A549 (cell line): ENCODE measurements at regions of chr17 and their contacts with region 1.

Region 1: DNA sequence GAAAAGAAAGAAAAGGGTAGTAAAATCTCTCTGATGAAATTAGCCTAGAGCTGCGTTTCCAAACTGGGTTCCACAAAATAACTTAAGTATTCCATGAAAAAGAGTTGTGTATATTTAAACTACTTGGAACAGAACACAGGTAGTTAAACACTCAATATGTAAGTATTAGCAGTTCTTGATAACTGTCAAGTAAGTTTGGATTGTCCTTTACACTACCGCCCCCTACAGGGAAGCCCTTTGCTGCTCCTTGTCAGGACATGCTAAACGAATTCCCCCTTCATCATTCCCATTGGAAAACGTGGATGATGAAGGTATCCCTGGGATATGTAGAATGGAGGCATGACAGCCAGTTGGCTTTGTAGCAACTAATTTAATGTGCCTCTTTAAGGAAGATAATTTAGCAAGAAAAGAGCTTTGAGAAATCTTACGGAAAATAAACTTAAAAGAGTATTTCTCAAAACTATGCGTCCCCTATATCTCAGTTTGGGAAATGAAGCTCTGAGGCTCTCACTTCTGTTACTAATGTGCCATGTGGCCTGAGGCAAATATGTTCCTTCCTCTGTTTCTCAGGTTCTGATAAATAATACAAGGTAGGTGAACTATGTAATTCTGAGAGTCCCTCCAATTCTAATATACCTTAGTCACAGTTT is 18.8 kb downstream of the NCBP3 start:
- DNase-seq: peak; percentile 75 to 86
- ATAC-seq: peak; percentile 86 to 88
- H3K4me3 ChIP-seq: no peak overlapping the region
- H3K27ac ChIP-seq: no peak overlapping the region
- H3K4me1 ChIP-seq: no peaks in the 10 kb centered on the region
- CTCF ChIP-seq: peak; percentile 87
- EP300 ChIP-seq: no peak
- POLR2A ChIP-seq: no peak
- RAD21 ChIP-seq: peak; percentile 81 to 88

Region 2: GRCh38 chr17:3723556-3724369 is 103.5 kb before region 1 on chr17 and contains the start of gene HASPIN:
- CTCF ChIA-PET with region 1: interaction called, 491 read pairs
- POLR2A ChIA-PET with region 1: interaction called, 5 read pairs
- DNase-seq: peak; percentile 94 to 97
- ATAC-seq: peak; percentile 94 to 95
- H3K4me3 ChIP-seq: peak within 1 kb of the TSS; percentile 60
- H3K27ac ChIP-seq: peak within 1 kb of the TSS; percentile 88 to 89
- H3K4me1 ChIP-seq: peaks cover 42% of the 10 kb centered on the region
- CTCF ChIP-seq: no peak
- EP300 ChIP-seq: no peak; a peak in 1 of 5 replicates
- POLR2A ChIP-seq: peak; percentile 93
- RAD21 ChIP-seq: no peak; a peak in 1 of 5 replicates
- polyA plus RNA-seq, gene HASPIN: 8.7 and 10.0 TPM in 2 replicates

Region 3: DNA sequence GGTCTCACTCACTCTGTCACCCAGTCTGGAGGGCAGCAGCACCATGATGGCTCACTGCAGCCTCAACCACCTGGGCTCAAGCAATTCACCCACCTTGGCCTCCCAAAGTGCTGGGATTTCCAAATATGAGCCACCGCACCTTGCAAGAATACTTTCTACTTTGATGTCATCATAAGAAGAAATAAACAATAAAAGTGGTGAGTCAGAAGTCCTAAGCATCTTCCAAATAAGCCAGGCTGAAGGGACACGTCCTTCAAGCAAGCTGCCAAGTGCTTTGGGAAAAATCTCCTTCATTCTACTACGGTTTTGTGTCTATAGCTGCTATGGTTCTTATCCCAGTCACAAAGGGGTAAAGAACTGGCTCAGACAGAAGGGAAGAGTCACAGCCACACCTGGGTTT is 83.2 kb before region 1 on chr17:
- CTCF ChIA-PET with region 1: interaction called, 491 read pairs
- POLR2A ChIA-PET with region 1: no interaction called
- DNase-seq: peak in 1 of 2 experiments; percentile 52
- ATAC-seq: no peak; a peak in 1 of 6 replicates
- H3K4me3 ChIP-seq: no peak overlapping the region
- H3K27ac ChIP-seq: no peak overlapping the region
- H3K4me1 ChIP-seq: peaks cover 8% of the 10 kb centered on the region; the same call in 2 of the 3 replicates
- CTCF ChIP-seq: no peak
- EP300 ChIP-seq: no peak
- POLR2A ChIP-seq: no peak
- RAD21 ChIP-seq: no peak

Region 4: DNA sequence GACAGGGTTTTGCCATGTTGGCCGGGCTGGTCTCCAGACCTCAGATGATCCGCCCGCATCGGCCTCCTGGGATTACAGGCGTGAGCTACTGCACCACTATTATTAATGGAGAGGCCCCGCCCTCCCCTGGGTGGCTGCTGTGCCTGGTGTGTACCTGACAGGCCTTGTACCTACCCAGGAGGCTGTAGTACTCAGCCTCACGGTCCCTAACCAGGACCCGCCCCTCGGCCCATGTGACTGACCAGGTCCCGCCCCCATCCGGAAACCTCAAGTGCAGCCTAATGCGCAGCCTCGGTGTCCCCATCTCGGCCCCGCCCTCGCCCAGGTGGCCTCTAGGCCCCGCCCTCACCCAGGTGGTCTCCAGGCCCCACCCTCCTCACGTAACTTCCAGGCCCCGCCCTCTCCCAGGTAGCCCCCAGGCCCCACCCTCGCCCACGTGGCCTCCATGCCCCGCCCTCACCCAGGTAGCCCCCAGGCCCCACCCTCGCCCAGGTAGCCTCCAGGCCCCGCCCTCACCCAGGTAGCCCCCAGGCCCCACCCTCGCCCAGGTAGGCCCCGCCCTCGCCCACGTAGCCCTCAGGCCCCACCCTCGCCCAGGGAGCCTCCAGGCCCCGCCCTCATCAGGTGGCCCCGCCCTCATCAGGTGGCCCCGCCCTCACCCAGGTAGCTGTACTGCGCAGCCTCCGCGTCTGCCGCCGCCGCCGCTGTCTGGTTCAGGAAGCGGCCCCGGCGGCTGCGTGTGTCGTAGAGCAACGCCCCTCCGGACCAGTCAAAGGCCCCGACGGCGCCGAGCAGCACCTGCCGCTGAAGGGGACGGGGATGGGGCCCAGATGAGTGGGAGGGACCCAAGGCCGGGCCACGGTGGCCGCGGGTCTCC is 72.6 kb before region 1 on chr17:
- CTCF ChIA-PET with region 1: interaction called, 24 read pairs
- POLR2A ChIA-PET with region 1: no interaction called
- DNase-seq: peak in 1 of 2 experiments; percentile 58
- ATAC-seq: peak; percentile 54 to 75
- H3K4me3 ChIP-seq: peak overlapping the region; percentile 36
- H3K27ac ChIP-seq: peak overlapping the region in 1 of 2 experiments; percentile 45; a peak in 2 of 6 replicates
- H3K4me1 ChIP-seq: peaks cover 9% of the 10 kb centered on the region; the same call in 1 of the 3 replicates
- CTCF ChIP-seq: no peak
- EP300 ChIP-seq: no peak
- POLR2A ChIP-seq: no peak
- RAD21 ChIP-seq: no peak

Region 5: GRCh38 chr17:3773511-3773910 is 53.7 kb before region 1 on chr17:
- CTCF ChIA-PET with region 1: interaction called, 17 read pairs
- POLR2A ChIA-PET with region 1: no interaction called
- DNase-seq: peak in 1 of 2 experiments; percentile 46
- ATAC-seq: peak; percentile 45 to 79; a peak in 4 of 6 replicates
- H3K4me3 ChIP-seq: no peak overlapping the region
- H3K27ac ChIP-seq: peak overlapping the region; percentile 36 to 67; a peak in 5 of 6 replicates
- H3K4me1 ChIP-seq: peaks cover 13% of the 10 kb centered on the region
- CTCF ChIP-seq: no peak
- EP300 ChIP-seq: no peak
- POLR2A ChIP-seq: no peak
- RAD21 ChIP-seq: no peak

Region 6: GRCh38 chr17:3796110-3796821 is 31.0 kb before region 1 on chr17:
- CTCF ChIA-PET with region 1: interaction called, 15 read pairs
- POLR2A ChIA-PET with region 1: no interaction called
- DNase-seq: no peak
- ATAC-seq: no peak
- H3K4me3 ChIP-seq: no peak overlapping the region
- H3K27ac ChIP-seq: peak overlapping the region; percentile 29 to 84; a peak in 3 of 6 replicates
- H3K4me1 ChIP-seq: peaks cover 39% of the 10 kb centered on the region
- CTCF ChIP-seq: no peak
- EP300 ChIP-seq: no peak
- POLR2A ChIP-seq: no peak
- RAD21 ChIP-seq: no peak

Region 7: DNA sequence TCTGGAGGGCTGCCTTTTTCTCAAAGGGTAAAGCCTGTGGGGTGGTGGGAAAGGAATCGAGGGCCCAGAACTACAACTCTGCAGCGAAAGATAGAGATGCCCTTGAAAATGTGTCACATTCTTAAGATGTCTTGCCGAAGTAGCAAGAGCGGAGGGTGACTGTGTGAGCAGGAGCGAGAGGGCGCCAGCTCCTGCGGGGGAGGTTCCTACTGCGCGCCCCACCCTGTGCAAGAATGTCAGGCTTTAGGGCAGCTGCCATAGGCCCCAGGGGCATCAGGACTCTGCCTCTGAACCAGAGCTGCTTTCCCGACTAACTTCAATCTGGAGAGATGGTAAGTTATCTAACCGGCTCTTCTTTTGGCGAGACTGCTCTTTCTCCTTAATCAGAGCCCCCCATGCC is 14.5 kb before region 1 on chr17:
- CTCF ChIA-PET with region 1: interaction called, 71 read pairs
- POLR2A ChIA-PET with region 1: no interaction called
- DNase-seq: no peak
- ATAC-seq: no peak; a peak in 1 of 6 replicates
- H3K4me3 ChIP-seq: no peak overlapping the region
- H3K27ac ChIP-seq: no peak overlapping the region
- H3K4me1 ChIP-seq: 0 out of 3 replicates have a peak, but pooled peaks cover 4% of the 10 kb centered on the region
- CTCF ChIP-seq: no peak
- EP300 ChIP-seq: no peak
- POLR2A ChIP-seq: no peak
- RAD21 ChIP-seq: no peak